Activated CD8-positive, alpha-beta memory T cell treated with anti-CD3 and anti-CD28 coated beads, Interleukin-2, amount 10 ng/mL, durations not matched to agents 7 days and 5 days (primary cell): ENCODE measurements at regions of chr3 and their contacts with region 1.

Region 1: DNA sequence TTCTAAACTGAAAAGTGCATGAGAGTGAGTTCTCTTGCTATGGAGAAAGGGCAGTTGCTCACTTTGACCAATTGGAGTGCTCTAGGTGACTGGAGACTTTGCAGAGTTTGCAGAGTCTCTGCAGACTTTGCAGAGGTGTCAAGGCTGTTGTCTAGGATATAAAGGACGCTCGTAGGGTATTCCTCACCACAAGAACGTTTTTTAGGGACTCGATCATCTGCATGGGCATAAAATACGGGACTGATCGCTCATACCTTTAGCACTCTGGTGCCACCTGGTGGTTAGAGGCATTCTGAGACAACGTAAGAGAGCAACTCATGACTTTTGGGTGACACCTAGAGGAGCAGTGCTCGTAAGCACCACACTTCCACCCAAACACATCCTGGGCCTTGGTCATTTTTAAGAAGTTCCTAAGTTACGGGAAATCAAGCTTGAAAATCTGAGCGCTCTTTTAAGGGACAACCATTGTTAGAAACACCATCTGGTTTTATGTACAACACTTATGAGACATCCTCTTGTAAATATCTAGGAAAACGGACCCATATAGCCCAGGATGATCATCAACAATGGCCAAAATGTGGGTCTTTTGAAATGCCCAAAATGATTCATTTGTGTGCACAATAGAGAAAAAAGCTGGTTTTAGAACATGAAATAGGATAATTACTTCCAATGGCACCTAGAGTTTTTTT is 51.6 kb upstream of the XCR1 start:
- DNase-seq: peak; percentile 94
- ATAC-seq: peak; percentile 98
- H3K4me3 Mint-ChIP-seq: no peak overlapping the region
- H3K27ac Mint-ChIP-seq: peak overlapping the region; percentile 67
- H3K4me1 Mint-ChIP-seq: peaks cover 58% of the 10 kb centered on the region
- H3K27me3 Mint-ChIP-seq: peaks cover 10% of the 10 kb centered on the region

Region 2: DNA sequence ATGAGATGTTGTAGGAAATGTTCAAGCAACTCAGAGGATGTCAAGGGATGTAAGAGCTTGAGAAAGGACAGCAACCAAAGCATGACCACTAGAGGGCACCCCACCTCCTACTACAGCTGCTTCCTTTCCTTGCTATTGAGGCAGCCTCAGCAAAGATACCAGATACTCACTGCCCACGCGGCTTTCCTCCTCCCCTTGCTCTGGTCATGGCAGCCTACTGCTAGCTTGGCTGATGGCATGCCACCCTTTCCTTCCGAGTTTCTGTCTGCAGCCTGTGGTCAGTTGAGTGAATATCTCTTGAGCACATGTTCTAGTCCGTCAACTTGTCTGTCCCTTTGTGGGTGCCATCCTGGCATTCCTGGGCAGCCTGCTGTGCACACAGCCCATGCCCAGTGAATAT is 140.0 kb before region 1 on chr3:
- CTCF ChIA-PET with region 1: interaction called, 708 read pairs
- DNase-seq: peak; percentile 93
- ATAC-seq: peak; percentile 79
- H3K4me3 Mint-ChIP-seq: no peak overlapping the region
- H3K27ac Mint-ChIP-seq: peak overlapping the region; percentile 57
- H3K4me1 Mint-ChIP-seq: peaks cover 58% of the 10 kb centered on the region
- H3K27me3 Mint-ChIP-seq: no peaks in the 10 kb centered on the region

Region 3: DNA sequence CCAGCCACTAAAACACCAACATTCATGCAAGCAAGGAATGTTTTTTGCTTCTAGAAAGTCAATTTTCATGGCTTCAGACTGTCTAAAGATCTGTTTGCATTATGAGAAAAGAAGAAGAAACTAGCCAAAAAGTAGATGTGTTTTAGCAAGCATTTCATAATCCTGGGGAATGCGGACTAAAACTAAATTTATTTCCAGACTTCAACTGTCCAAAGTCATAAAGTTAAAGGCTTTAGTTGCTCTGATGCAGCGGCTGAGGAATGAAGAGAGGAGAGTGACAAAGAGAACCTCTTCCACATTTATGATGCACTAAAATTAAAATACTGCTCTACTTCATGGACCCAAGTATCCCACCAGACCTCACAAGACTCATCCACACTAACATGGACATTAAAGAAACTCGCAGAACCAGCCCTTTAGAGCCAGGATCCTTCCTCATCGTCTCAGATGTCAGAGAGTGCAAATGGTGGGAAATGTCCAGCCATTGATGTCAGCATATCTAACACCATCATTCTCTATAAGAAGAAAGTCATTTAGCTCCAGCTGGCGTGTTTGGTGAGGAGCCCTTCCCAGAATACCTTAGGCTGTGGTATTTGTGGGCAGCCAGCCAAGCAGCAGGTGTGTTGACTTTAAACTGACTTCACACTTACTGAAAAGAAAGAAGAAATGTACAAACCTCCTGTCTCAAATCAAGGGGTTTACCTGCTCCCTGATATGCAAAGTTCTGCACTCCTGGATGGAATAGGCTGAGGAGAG is 100.7 kb before region 1 on chr3:
- CTCF ChIA-PET with region 1: interaction called, 16 read pairs
- DNase-seq: peak; percentile 85
- ATAC-seq: peak; percentile 35
- H3K4me3 Mint-ChIP-seq: peak overlapping the region; percentile 57
- H3K27ac Mint-ChIP-seq: peak overlapping the region; percentile 92
- H3K4me1 Mint-ChIP-seq: peaks cover 92% of the 10 kb centered on the region
- H3K27me3 Mint-ChIP-seq: no peaks in the 10 kb centered on the region

Region 4: DNA sequence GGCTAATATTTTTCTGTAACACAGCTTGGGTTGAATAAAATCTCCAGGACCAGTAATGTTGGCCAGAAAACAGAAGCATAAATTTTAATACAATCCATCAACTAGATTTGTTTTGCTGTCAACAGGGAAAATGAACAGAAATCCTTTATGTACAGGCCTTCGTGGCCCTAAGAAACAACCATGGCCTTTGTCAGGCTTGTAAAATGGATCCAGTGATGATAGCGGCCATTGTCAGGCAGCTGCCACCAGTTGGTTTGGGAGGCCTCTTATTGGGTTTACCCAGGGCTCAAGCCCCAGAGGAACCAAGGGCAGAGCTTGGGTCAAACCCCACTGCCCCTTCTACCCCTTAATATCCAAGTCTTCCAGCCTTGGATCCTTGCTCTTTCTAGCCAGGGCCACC is 77.7 kb before region 1 on chr3:
- CTCF ChIA-PET with region 1: interaction called, 38 read pairs
- DNase-seq: no peak
- ATAC-seq: no peak
- H3K4me3 Mint-ChIP-seq: no peak overlapping the region
- H3K27ac Mint-ChIP-seq: no peak overlapping the region
- H3K4me1 Mint-ChIP-seq: peaks cover 8% of the 10 kb centered on the region
- H3K27me3 Mint-ChIP-seq: no peaks in the 10 kb centered on the region

Region 5: GRCh38 chr3:46098319-46098761 is 19.5 kb after region 1 on chr3:
- CTCF ChIA-PET with region 1: interaction called, 12 read pairs
- DNase-seq: peak; percentile 90
- ATAC-seq: peak; percentile 69
- H3K4me3 Mint-ChIP-seq: peak overlapping the region; percentile 22
- H3K27ac Mint-ChIP-seq: peak overlapping the region; percentile 96
- H3K4me1 Mint-ChIP-seq: peaks cover 83% of the 10 kb centered on the region
- H3K27me3 Mint-ChIP-seq: no peaks in the 10 kb centered on the region

Region 6: GRCh38 chr3:46378426-46378942 is 299.6 kb after region 1 on chr3:
- CTCF ChIA-PET with region 1: interaction called, 29 read pairs
- DNase-seq: peak; percentile 81
- ATAC-seq: peak; percentile 34
- H3K4me3 Mint-ChIP-seq: no peak overlapping the region
- H3K27ac Mint-ChIP-seq: peak overlapping the region; percentile 53
- H3K4me1 Mint-ChIP-seq: peaks cover 72% of the 10 kb centered on the region
- H3K27me3 Mint-ChIP-seq: peaks cover 6% of the 10 kb centered on the region